PC-3 (cell line): ENCODE measurements at regions of chr14 and their contacts with region 1.

Region 1: DNA sequence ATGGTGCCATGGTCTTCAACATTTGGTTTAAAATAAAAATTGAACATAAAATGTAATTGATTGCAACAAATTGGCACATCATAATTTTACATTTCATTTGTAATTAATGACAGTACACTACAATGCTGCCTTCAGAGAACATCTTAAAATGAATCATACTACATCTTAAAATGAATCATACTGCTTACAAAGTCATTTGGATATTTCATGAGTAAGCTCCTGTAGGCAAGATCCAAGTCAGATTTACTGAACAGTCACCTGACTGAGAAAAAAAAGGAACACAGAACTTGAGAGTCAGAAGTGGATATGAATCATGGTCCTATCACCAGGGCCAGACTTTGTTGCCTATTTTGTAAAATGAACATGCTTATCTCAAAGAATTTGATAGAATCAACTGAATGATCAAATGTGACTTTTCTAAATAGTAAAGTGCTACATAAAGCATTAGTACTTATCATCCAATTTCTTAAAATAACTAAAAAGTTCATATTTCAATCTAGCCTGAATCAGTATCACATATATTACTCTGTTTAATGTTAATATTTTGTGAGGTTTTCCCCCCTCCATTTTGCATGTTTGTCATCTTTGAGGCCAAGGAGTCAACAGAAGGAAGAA is 32.7 kb upstream of the FBLN5 start:
- DNase-seq: peak; percentile 90
- ATAC-seq: peak; percentile 95
- H3K4me3 ChIP-seq: no peak overlapping the region
- H3K27ac ChIP-seq: peak overlapping the region; percentile 50
- H3K4me1 ChIP-seq: peaks cover 21% of the 10 kb centered on the region
- H3K27me3 ChIP-seq: no peaks in the 10 kb centered on the region
- CTCF ChIP-seq: no peak

Region 2: DNA sequence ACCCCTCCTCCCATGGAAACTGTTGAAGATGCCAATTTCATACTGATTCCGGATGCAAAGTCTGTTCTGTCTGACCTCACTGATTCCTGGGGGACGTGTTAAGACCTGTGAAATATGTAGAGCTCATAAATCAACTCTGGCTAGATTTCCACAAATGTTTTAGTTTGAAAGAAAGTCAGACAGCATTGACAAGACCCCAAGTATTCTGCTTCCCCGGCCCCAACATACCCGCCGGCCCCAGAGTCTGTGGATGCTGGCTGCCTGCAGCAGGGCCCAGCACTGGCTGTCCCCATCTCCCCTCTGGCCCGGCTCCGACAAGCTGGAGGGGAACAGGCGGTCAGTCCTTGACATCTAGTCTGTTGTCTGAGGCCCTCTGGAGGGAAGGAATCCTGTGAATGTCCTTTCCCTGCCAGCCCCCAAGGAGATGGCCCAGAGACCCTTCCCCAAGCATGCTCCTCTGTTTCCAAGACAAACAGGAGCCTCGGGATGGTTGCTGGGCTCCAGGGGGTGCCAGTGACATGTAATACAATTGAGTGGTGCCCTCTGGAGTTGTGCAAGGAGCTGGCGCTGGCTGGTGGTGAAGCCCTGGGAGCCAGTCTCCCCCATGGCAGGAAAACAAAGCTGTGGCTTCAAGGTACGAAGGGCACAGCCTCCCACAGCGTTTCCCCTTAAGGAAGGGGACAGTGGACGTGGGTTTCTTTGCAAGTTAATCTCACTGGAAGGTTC is 55.1 kb before region 1 on chr14:
- CTCF ChIA-PET with region 1: no interaction called
- POLR2A ChIA-PET with region 1: no interaction called
- intact Hi-C with region 1: no loop called
- DNase-seq: no peak
- ATAC-seq: no peak
- H3K4me3 ChIP-seq: no peak overlapping the region
- H3K27ac ChIP-seq: no peak overlapping the region
- H3K4me1 ChIP-seq: no peaks in the 10 kb centered on the region
- H3K27me3 ChIP-seq: 0 out of 2 replicates have a peak, but pooled peaks cover 3% of the 10 kb centered on the region
- CTCF ChIP-seq: no peak

Region 3: GRCh38 chr14:92039719-92040430 is 59.6 kb after region 1 on chr14 and contains the start of gene TRIP11:
- CTCF ChIA-PET with region 1: no interaction called
- POLR2A ChIA-PET with region 1: no interaction called
- intact Hi-C with region 1: loop called (anchors 2 kb)
- DNase-seq: peak; percentile 90
- ATAC-seq: peak; percentile 94
- H3K4me3 ChIP-seq: peak within 1 kb of the TSS; percentile 92
- H3K27ac ChIP-seq: peak within 1 kb of the TSS; percentile 83
- H3K4me1 ChIP-seq: peaks cover 18% of the 10 kb centered on the region
- H3K27me3 ChIP-seq: no peaks in the 10 kb centered on the region
- CTCF ChIP-seq: no peak
- total RNA-seq, gene TRIP11: 9.6 and 14.3 TPM in 2 replicates